Activated CD4-positive, alpha-beta T cell treated with anti-CD3 and anti-CD28 coated beads for 36 hours (primary cell): ENCODE measurements at regions of chr12 and their contacts with region 1.

Region 1: DNA sequence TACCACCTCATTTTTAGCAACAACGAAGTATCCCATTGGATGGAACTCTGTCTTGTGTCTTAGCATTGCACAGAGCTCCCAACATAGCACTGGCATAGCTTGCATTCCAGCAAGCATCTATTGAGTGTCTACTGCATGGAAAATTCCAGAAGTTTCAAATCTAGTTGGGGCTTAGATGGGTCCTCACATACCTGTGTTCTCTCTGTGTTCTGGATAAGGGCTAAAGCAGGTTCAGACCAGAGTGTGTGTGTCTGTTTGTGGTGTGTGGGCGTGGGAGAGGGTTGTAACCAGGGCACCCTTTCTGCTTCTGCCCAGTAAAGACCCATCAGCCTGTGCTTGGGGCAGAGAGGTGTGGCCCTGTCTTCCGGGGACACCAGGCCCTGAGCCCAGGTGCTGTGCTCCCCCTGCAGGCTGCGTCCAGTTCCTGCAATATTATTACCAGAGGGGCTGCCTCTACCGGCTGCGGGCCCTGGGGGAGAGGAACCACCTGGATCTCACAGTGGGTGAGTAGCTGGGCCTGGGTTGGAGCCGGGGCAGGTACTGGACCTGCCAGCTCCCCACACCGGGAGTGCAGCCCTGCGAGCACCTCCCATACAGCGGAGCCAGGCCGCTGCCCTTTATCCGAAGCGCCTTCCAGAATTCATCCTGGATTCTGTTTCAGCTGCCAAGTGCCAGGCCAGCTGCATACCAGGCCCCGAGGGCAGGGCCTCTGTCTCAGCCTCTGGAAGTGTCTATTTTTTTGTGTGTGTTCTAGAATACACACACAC is 20.3 kb downstream of the RHOF start:
- DNase-seq: peak; percentile 90
- ATAC-seq: peak; percentile 83
- H3K4me3 Mint-ChIP-seq: no peak overlapping the region
- H3K27ac Mint-ChIP-seq: peak overlapping the region; percentile 81
- H3K4me1 Mint-ChIP-seq: peaks cover 11% of the 10 kb centered on the region
- H3K27me3 Mint-ChIP-seq: no peaks in the 10 kb centered on the region

Region 2: GRCh38 chr12:121697098-121697698 is 76.0 kb before region 1 on chr12:
- CTCF ChIA-PET with region 1: interaction called, 10 read pairs
- POLR2A ChIA-PET with region 1: no interaction called
- intact Hi-C with region 1: loop called (anchors 1 kb)
- DNase-seq: peak; percentile 27
- ATAC-seq: no peak
- H3K4me3 Mint-ChIP-seq: no peak overlapping the region
- H3K27ac Mint-ChIP-seq: no peak overlapping the region
- H3K4me1 Mint-ChIP-seq: no peaks in the 10 kb centered on the region
- H3K27me3 Mint-ChIP-seq: no peaks in the 10 kb centered on the region